WTC11 (cell line): ENCODE measurements at regions of chr1 and their contacts with region 1.

Region 1: DNA sequence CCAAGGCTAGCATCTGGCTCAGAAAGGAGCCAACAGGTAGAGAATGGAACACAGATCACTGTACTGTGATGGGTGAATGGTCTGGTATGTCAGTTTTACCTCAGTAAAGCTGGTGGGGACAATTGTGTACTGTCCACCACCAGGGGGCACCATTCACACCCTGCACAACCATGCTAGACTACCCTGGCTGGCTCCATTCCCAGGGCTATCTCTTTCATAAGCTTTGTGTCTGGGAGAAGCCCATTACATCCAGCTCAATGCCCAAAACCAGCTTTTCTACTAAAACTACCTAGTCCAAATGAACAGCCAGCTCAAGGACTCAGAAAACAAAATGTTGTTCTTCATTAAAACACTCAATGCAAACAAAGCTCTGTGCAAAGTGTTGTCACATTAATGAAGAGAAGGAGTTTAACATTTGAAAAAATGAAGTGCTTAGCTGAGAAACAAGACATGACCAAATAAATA is 62.0 kb upstream of the RASAL2 start:
- DNase-seq: peak; percentile 80
- ATAC-seq: peak; percentile 96
- H3K4me3 Mint-ChIP-seq: no peak overlapping the region
- H3K27ac Mint-ChIP-seq: no peak overlapping the region
- H3K4me1 Mint-ChIP-seq: peaks cover 12% of the 10 kb centered on the region
- H3K27me3 Mint-ChIP-seq: no peaks in the 10 kb centered on the region
- CTCF ChIP-seq: peak; percentile 84

Region 2: DNA sequence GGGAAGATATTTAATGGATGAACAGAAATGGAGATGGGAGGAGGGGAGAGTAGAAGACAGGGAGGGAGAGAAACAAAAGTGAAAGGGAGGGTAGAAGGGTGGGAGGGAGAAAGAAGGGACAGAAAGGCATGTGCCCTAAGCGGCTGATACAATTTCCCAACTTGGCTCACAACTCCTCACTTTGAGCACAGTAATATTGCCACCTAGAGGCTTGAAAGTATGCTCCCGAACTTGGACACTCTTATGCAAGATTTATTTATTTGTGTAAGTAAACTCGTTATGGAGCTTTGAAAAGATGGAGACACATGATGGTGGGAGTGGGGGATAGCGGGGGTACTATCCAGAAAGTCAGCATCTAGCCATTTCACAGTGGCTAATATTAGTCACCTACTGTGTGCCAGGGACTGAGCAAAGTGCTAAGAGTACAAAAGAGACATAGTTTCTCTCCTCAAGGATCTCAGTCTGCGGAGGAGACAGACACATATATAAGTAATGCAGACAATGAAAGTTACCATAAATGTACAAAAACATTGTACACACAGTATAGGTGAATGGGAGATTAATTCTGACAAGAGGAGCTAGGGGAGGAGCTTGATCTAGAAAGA is 251.7 kb before region 1 on chr1:
- CTCF ChIA-PET with region 1: no interaction called
- POLR2A ChIA-PET with region 1: no interaction called
- DNase-seq: no peak
- ATAC-seq: peak; percentile 65
- H3K4me3 Mint-ChIP-seq: no peak overlapping the region
- H3K27ac Mint-ChIP-seq: no peak overlapping the region
- H3K4me1 Mint-ChIP-seq: peaks cover 32% of the 10 kb centered on the region
- H3K27me3 Mint-ChIP-seq: no peaks in the 10 kb centered on the region
- CTCF ChIP-seq: no peak

Region 3: GRCh38 chr1:177922209-177922608 is 109.7 kb before region 1 on chr1:
- CTCF ChIA-PET with region 1: no interaction called
- POLR2A ChIA-PET with region 1: no interaction called
- DNase-seq: no peak
- ATAC-seq: peak; percentile 84
- H3K4me3 Mint-ChIP-seq: no peak overlapping the region
- H3K27ac Mint-ChIP-seq: no peak overlapping the region
- H3K4me1 Mint-ChIP-seq: peaks cover 12% of the 10 kb centered on the region
- H3K27me3 Mint-ChIP-seq: no peaks in the 10 kb centered on the region
- CTCF ChIP-seq: no peak

Region 4: GRCh38 chr1:177954076-177954475 is 77.8 kb before region 1 on chr1:
- CTCF ChIA-PET with region 1: no interaction called
- POLR2A ChIA-PET with region 1: no interaction called
- DNase-seq: no peak
- ATAC-seq: no peak
- H3K4me3 Mint-ChIP-seq: no peak overlapping the region
- H3K27ac Mint-ChIP-seq: no peak overlapping the region
- H3K4me1 Mint-ChIP-seq: no peaks in the 10 kb centered on the region; the same call in 1 of the 2 replicates
- H3K27me3 Mint-ChIP-seq: no peaks in the 10 kb centered on the region
- CTCF ChIP-seq: no peak

Region 5: GRCh38 chr1:177975588-177976495 is 56.0 kb before region 1 on chr1:
- CTCF ChIA-PET with region 1: no interaction called
- POLR2A ChIA-PET with region 1: no interaction called
- DNase-seq: no peak
- ATAC-seq: no peak
- H3K4me3 Mint-ChIP-seq: no peak overlapping the region
- H3K27ac Mint-ChIP-seq: no peak overlapping the region
- H3K4me1 Mint-ChIP-seq: no peaks in the 10 kb centered on the region
- H3K27me3 Mint-ChIP-seq: no peaks in the 10 kb centered on the region
- CTCF ChIP-seq: no peak

Region 6: GRCh38 chr1:177996957-177997356 is 34.9 kb before region 1 on chr1:
- CTCF ChIA-PET with region 1: interaction called, 10 read pairs
- POLR2A ChIA-PET with region 1: no interaction called
- DNase-seq: no peak
- ATAC-seq: no peak; the same call in 1 of the 2 replicates
- H3K4me3 Mint-ChIP-seq: no peak overlapping the region
- H3K27ac Mint-ChIP-seq: no peak overlapping the region
- H3K4me1 Mint-ChIP-seq: peaks cover 7% of the 10 kb centered on the region
- H3K27me3 Mint-ChIP-seq: no peaks in the 10 kb centered on the region
- CTCF ChIP-seq: no peak

Region 7: DNA sequence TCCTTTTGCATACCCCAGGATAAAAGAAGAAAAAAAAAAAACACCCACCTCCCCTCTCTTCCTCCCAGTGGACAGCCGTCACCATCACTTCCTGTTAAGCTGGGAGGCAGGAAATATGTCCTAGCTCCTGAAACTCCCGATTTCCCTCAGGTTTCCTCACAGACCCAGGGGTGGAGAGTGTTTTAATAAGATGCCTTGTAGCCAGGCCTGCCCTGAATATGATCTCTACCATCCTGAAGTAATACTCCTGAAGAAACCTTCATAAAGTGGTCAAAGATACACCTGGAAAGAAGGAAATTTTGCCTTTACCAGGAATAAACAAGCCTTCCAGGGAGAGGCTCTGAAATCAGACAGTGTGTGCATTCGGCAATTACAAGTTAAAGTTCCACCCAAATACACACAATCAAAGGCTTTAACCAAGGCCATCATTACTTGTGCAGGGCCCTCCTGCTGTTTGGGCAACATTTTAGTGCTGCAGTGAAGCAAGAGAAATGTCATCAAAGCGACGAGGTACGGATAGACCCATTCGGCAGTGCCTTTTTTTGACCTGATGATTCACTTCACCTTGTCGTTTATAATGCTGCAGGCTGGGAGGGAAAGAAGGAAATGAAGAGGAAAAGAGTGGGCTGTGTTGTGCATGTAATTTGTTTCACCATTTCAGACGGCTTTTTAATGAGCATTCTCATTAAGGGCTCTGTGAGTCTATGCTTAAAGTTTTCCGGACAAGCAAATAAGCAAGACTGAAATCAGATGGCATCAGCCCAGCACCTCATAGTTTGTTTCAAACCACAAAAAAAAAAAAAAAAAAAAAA is 21.0 kb after region 1 on chr1:
- CTCF ChIA-PET with region 1: interaction called, 43 read pairs
- POLR2A ChIA-PET with region 1: no interaction called
- DNase-seq: no peak
- ATAC-seq: no peak
- H3K4me3 Mint-ChIP-seq: no peak overlapping the region
- H3K27ac Mint-ChIP-seq: peak overlapping the region; percentile 6; the same call in 1 of the 2 replicates
- H3K4me1 Mint-ChIP-seq: peaks cover 63% of the 10 kb centered on the region
- H3K27me3 Mint-ChIP-seq: no peaks in the 10 kb centered on the region
- CTCF ChIP-seq: no peak

Region 8: DNA sequence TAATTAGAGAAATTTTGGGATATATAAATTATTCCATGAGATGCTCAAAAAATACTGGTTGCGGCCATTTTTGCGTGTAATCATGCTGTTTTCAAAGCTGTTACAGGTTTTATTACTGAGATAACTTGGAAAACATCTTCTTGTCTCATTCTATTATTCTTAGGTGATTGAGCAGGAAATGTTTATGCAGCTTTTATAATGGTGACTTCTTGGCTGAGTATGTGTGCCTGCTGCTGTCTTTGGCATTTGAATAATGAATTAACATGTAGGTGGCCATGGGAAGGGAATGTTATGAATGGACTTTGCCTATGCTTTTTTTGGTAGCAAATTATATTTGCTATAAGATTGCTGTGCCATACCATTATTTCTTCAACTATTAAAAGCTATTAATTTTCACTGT is 114.5 kb after region 1 on chr1:
- CTCF ChIA-PET with region 1: interaction called, 10 read pairs
- POLR2A ChIA-PET with region 1: no interaction called
- DNase-seq: no peak
- ATAC-seq: no peak
- H3K4me3 Mint-ChIP-seq: no peak overlapping the region
- H3K27ac Mint-ChIP-seq: no peak overlapping the region
- H3K4me1 Mint-ChIP-seq: peaks cover 49% of the 10 kb centered on the region
- H3K27me3 Mint-ChIP-seq: no peaks in the 10 kb centered on the region
- CTCF ChIP-seq: no peak

Region 9: DNA sequence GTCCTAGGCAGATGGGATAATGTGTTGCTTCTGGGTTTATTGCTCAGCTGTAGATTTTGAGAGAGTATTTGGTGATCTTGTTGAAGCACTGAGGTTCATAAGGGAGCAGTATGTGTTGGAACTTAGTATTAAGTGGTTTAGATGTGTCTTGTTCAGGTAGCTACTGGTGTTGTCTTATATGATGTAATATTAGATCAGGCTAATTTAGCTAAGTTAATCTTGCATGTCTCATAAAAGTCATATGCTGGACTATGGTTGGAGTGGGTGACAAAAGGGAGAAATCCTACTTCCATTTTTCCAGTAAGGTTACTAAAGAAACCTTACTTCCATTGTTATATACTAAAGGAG is 268.4 kb after region 1 on chr1:
- CTCF ChIA-PET with region 1: interaction called, 21 read pairs
- POLR2A ChIA-PET with region 1: no interaction called
- DNase-seq: no peak
- ATAC-seq: no peak
- H3K4me3 Mint-ChIP-seq: no peak overlapping the region
- H3K27ac Mint-ChIP-seq: peak overlapping the region; percentile 87; the same call in 1 of the 2 replicates
- H3K4me1 Mint-ChIP-seq: peaks cover 28% of the 10 kb centered on the region
- H3K27me3 Mint-ChIP-seq: no peaks in the 10 kb centered on the region
- CTCF ChIP-seq: no peak